ENCODE measurements at regions of chr4 and their contacts with region 1.

Region 1: DNA sequence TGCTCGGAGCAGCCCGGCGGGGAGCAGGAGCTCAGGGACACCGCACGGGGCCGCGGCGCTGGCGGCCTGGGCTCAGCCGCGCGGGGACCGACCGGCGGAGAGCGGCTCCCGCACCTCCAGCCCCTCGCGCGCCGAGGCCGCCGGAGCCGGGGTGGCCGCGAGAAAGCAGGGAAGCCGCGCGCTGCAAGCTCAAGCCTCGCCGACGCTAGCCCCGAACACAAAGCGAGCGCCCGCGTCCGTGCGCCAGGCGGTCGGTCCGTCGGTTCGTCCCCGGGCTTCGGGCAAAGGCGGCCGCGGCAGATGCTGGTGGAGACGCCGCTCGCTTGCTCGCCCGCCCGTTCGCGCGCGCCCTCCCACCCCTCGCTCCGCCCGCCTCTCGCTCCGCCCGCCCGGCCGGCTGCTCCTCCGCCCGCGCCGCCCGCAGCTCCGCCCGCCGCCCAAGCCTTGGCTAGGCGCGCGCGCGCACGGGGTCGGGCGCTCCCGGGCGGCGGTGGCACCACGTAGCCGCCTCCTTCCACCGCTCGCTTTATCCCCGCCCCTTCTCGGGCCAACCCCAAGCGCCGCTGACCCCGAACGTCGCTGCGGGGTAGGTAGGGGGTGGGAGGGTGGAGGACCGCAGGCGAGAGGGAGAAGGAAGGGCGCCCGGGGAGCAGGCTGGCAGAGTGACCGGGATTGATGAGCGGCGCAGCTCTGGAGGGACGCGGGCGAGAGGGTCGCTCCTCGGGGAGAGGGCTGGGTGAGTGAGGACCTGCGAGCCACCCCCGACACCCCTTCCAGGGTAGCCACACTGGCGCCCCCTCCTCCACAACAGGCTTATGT is at the start of gene TSPAN5:
- DNase-seq: no peak
- H3K4me3 ChIP-seq: peak within 1 kb of the TSS; percentile 74 to 78 (median 76)
- H3K27ac ChIP-seq: peak within 1 kb of the TSS; percentile 77 to 84 (median 81)
- H3K4me1 ChIP-seq: peaks cover 11 to 64% (median 52%) of the 10 kb centered on the region in 4 donors
- H3K27me3 ChIP-seq: no peaks in the 10 kb centered on the region
- CTCF ChIP-seq: no peak
- EP300 ChIP-seq: no peak
- POLR2A ChIP-seq: no peak
- total RNA-seq, gene TSPAN5: 9.1 to 16.8 (median 13.3) TPM

Region 2: DNA sequence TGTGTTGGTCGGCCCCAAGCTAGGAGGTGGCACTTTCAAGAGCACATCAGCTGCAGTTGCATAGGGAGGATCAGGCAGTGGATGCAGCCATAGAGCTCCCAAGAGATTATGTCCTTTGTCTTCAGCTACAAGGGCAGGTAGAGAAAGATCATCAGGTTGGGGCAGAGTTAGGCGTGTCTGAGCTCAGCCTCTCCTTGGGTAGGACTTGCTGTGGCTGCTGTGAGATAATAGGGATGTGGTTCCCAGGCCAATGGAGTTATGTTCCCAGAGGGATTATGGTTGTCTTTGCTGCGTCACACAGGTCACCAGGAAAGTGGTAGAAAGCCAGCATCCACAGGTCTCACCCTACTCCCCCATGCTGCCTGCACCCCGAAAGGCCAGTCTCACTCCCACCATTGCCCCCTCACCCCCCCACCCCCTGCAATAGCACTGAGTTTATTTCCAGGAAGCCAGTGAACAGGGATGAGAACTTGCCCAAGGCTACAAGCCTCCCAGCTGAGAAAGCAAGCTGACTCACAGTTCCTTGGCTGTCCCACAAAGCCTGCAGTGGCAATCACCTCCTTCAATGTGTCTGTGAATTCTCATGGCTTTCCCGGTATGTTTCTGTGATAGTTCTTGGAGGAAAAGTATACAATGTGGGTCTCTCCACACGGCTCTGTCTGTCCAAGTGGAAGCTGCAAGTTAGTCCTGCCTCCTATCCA is 663.6 kb before region 1 on chr4:
- intact Hi-C with region 1: no loop called
- DNase-seq: no peak
- H3K4me3 ChIP-seq: no peak overlapping the region
- H3K27ac ChIP-seq: no peak overlapping the region
- H3K4me1 ChIP-seq: no peaks in the 10 kb centered on the region
- H3K27me3 ChIP-seq: no peaks in the 10 kb centered on the region
- CTCF ChIP-seq: no peak
- EP300 ChIP-seq: no peak
- POLR2A ChIP-seq: no peak

Region 3: GRCh38 chr4:98928505-98929340 is 270.2 kb after region 1 on chr4 and contains the start of gene EIF4E:
- intact Hi-C with region 1: loop called (anchors 10 kb)
- DNase-seq: peak; percentile 98
- H3K4me3 ChIP-seq: peak within 1 kb of the TSS; percentile 96 to 99 (median 97)
- H3K27ac ChIP-seq: peak within 1 kb of the TSS; percentile 92 to 97 (median 94)
- H3K4me1 ChIP-seq: peaks cover 10 to 44% (median 25%) of the 10 kb centered on the region in 4 donors
- H3K27me3 ChIP-seq: no peaks in the 10 kb centered on the region
- CTCF ChIP-seq: peak in 1 of 3 experiments; percentile 3
- EP300 ChIP-seq: no peak
- POLR2A ChIP-seq: no peak
- total RNA-seq, gene EIF4E: 67.7 to 84.3 (median 76.5) TPM

Measured in esophagus muscularis mucosa (tissue), 4 donors.